Natural killer cell (primary cell): ENCODE measurements at regions of chr5 and their contacts with region 1.

Region 1: GRCh38 chr5:67209142-67209771 is 12.7 kb upstream of the CD180 start:
- DNase-seq: peak in 1 of 2 donors; percentile 88
- ATAC-seq: peak; percentile 77 to 84 (median 83)
- H3K4me3 ChIP-seq: no peak overlapping the region
- H3K4me3 Mint-ChIP-seq: no peak overlapping the region
- H3K27ac ChIP-seq: no peak overlapping the region
- H3K27ac Mint-ChIP-seq: peak overlapping the region; percentile 3 to 74
- H3K4me1 ChIP-seq: peaks cover 38% of the 10 kb centered on the region
- H3K4me1 Mint-ChIP-seq: peaks cover 45 to 47% of the 10 kb centered on the region in 2 donors
- H3K27me3 ChIP-seq: no peaks in the 10 kb centered on the region
- H3K27me3 Mint-ChIP-seq: no peaks in the 10 kb centered on the region
- CTCF ChIP-seq: peak; percentile 82

Region 2: DNA sequence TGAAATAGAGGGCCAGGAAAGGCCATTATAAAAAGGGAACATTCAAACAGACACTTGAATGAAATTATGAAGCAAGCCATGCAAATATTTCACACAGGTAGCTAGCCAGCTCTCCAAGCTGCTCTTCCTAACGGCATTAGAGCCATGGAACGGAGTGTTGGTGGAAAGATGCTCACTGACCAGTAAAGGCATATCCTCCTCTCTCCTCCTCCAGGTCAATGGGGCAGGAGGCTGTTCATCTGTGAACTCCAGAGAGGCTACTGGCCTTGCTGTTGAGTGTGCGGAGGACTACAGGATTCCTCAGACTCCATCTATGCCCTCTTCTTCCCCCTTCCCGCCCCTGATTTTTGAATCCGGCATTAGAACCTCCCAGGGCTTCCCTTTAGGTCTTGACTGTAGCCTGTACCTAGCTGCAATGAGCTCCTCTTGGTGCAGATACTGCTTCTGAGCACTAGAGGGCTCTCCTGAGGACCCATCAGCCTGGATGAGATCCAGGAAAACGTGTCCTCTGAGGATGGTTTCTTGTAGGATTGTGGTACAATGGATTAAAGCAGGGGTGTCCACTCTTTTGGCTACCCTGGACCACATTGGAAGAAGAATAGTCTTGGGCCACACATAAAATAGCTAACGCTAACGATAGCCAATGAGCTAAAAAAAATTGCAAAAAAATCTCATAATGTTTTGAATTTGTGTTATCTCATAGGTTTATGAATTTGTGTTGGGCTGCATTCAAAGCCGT is 903.0 kb before region 1 on chr5:
- intact Hi-C with region 1: loop called (anchors 5 kb)
- DNase-seq: peak in 1 of 2 donors; percentile 62
- ATAC-seq: peak; percentile 40 to 73 (median 57)
- H3K4me3 ChIP-seq: no peak overlapping the region
- H3K4me3 Mint-ChIP-seq: no peak overlapping the region
- H3K27ac ChIP-seq: no peak overlapping the region
- H3K27ac Mint-ChIP-seq: no peak overlapping the region
- H3K4me1 ChIP-seq: no peaks in the 10 kb centered on the region
- H3K4me1 Mint-ChIP-seq: no peaks in the 10 kb centered on the region
- H3K27me3 ChIP-seq: no peaks in the 10 kb centered on the region
- H3K27me3 Mint-ChIP-seq: peaks cover 15 to 24% of the 10 kb centered on the region in 2 donors
- CTCF ChIP-seq: peak; percentile 38

Region 3: DNA sequence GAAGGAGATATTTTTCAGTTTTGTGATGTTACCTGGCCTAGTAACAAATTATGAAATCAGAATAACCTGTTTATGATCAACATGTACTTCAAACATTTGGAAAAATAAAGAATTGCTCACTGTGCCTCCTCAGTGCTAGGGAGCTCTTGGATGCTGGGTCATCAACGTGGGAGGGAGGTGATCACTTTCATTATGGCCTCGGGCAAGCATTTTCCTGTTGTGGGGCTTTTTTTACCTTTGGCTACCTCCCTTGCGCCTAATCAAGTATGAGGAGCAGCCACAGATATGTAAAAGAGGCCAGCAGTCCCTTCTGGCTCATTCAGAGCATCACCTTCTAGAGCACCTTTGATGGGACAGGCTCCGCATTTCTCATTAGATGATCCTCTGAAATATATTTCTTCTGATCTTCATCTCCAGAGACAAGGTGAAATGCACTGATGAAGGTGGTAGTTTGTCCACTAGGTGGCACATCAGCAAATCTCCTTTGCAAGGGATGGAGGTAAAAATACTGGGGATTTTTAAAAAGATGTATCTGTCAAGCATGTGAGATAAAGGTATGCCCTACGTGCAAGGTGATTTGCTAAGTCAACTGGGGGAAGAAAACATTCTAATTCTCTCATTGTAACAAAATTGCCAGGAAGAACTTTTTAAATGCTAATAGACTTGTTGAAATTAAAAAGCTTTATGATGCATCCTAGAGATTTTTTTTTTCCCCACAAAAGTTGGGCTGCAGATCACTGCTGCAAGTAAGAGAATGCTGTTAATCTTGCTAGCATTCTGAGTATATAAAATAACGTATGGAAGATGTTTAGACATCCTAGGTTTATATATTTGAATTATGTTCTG is 394.9 kb before region 1 on chr5:
- intact Hi-C with region 1: loop called (anchors 2 kb)
- DNase-seq: peak in 1 of 2 donors; percentile 74
- ATAC-seq: peak in 1 of 3 donors; percentile 47
- H3K4me3 ChIP-seq: no peak overlapping the region
- H3K4me3 Mint-ChIP-seq: no peak overlapping the region
- H3K27ac ChIP-seq: no peak overlapping the region
- H3K27ac Mint-ChIP-seq: no peak overlapping the region
- H3K4me1 ChIP-seq: no peaks in the 10 kb centered on the region
- H3K4me1 Mint-ChIP-seq: no peaks in the 10 kb centered on the region
- H3K27me3 ChIP-seq: no peaks in the 10 kb centered on the region
- H3K27me3 Mint-ChIP-seq: peaks cover 11 to 34% of the 10 kb centered on the region in 2 donors
- CTCF ChIP-seq: peak; percentile 59

Region 4: DNA sequence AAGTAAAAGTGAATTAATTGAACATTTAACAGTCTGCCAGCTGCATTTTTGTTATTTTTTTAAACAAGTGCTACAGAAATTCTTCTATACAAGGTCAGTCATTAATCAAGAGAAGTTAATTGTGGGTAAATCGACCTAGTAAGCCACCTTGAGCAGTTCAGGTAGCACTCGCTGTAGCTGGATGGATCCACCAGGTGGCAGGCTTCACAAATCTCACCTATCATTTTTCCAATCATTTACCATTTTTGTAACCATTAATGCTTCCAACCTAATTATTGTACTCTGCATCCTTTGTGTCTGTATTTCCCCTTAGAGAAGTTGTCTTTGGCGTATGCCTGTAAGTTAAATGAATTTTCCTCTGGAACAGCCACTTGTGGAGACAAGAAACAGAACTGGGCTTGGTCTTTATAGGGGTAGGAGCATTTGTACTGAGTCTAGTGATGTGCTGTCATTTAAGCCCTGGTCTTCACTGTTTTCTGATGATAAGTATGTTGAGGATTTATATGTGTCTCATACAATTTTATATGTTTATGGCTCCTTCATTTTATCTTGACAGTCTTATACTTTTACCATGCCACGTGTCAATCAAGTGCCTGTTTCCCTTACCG is 52.2 kb before region 1 on chr5:
- intact Hi-C with region 1: loop called (anchors 1 kb)
- DNase-seq: peak in 1 of 2 donors; percentile 82
- ATAC-seq: peak in 2 of 3 donors; percentile 67 to 78
- H3K4me3 ChIP-seq: no peak overlapping the region
- H3K4me3 Mint-ChIP-seq: no peak overlapping the region
- H3K27ac ChIP-seq: no peak overlapping the region
- H3K27ac Mint-ChIP-seq: no peak overlapping the region
- H3K4me1 ChIP-seq: no peaks in the 10 kb centered on the region
- H3K4me1 Mint-ChIP-seq: peaks cover 28 to 32% of the 10 kb centered on the region in 2 donors
- H3K27me3 ChIP-seq: no peaks in the 10 kb centered on the region
- H3K27me3 Mint-ChIP-seq: no peaks in the 10 kb centered on the region
- CTCF ChIP-seq: peak; percentile 90

Region 5: DNA sequence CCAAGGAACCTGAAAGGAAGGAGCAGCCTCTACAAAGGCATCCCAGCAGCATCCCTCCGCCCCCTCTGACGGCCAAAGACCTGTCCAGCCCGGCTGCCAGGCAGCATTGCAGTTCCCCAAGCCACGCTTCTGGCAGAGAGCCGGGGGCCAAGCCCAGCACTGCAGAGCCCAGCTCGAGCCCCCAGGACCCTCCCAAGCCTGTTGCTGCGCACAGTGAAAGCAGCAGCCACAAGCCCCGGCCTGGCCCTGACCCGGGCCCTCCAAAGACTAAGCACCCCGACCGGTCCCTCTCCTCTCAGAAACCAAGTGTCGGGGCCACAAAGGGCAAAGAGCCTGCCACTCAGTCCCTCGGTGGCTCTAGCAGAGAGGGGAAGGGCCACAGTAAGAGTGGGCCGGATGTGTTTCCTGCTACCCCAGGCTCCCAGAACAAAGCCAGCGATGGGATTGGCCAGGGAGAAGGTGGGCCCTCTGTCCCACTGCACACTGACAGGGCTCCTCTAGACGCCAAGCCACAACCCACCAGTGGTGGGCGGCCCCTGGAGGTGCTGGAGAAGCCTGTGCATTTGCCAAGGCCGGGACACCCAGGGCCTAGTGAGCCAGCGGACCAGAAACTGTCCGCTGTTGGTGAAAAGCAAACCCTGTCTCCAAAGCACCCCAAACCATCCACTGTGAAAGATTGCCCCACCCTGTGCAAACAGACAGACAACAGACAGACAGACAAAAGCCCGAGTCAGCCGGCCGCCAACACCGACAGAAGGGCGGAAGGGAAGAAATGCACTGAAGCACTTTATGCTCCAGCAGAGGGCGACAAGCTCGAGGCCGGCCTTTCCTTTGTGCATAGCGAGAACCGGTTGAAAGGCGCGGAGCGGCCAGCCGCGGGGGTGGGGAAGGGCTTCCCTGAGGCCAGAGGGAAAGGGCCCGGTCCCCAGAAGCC is 43.5 kb before region 1 on chr5:
- intact Hi-C with region 1: loop called (anchors 2 kb)
- DNase-seq: peak; percentile 75 to 89
- ATAC-seq: peak; percentile 80 to 91 (median 83)
- H3K4me3 ChIP-seq: peak overlapping the region; percentile 58
- H3K4me3 Mint-ChIP-seq: peak overlapping the region; percentile 90
- H3K27ac ChIP-seq: peak overlapping the region; percentile 97
- H3K27ac Mint-ChIP-seq: peak overlapping the region; percentile 92 to 97
- H3K4me1 ChIP-seq: peaks cover 36% of the 10 kb centered on the region
- H3K4me1 Mint-ChIP-seq: peaks cover 50 to 60% of the 10 kb centered on the region in 2 donors
- H3K27me3 ChIP-seq: no peaks in the 10 kb centered on the region
- H3K27me3 Mint-ChIP-seq: no peaks in the 10 kb centered on the region
- CTCF ChIP-seq: peak; percentile 73

Region 6: DNA sequence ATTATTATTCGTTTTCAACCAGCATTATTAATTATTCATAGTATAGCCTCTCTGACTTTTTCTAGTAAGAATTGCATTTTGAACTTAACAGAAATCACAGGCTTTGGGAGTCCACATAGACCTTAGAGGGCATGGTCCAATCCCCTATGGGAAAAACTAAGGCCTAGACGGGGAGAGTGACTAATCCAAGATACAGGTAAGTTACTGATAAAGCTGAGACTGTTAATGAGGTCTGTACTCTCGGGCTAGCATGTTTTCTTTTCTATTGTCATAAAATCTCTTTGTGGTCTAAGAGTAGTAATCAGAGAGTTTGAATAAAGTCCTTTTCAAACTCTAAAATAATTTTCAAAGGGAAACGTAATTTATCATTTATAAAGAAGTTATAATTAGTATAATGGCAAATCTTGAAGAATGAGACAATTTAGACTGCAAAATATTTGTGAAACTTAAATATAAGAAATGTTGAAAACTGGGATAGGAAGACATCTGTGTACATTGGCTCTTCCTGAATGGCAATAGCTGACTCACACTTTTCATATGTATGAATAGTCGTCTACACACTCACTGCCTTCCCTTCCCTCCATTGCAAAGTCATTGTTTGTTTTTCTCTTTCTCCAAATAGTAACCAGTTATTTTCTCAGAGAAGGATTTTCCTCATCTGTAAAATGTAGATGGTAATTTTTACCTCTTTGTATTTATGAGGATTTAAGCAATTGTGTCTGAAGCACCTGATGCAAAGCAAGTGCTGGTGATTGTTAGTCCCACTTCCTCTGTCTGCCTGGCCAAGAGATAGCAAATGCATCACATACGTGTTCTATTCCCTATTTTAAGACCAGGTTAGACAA is 195.2 kb after region 1 on chr5:
- intact Hi-C with region 1: no loop called
- DNase-seq: no peak
- ATAC-seq: no peak
- H3K4me3 ChIP-seq: no peak overlapping the region
- H3K4me3 Mint-ChIP-seq: no peak overlapping the region
- H3K27ac ChIP-seq: no peak overlapping the region
- H3K27ac Mint-ChIP-seq: no peak overlapping the region
- H3K4me1 ChIP-seq: no peaks in the 10 kb centered on the region
- H3K4me1 Mint-ChIP-seq: no peaks in the 10 kb centered on the region
- H3K27me3 ChIP-seq: no peaks in the 10 kb centered on the region
- H3K27me3 Mint-ChIP-seq: peaks cover 0 to 3% of the 10 kb centered on the region in 2 donors
- CTCF ChIP-seq: no peak